IMR-90 (cell line): ENCODE measurements at regions of chr10 and their contacts with region 1.

Region 1: DNA sequence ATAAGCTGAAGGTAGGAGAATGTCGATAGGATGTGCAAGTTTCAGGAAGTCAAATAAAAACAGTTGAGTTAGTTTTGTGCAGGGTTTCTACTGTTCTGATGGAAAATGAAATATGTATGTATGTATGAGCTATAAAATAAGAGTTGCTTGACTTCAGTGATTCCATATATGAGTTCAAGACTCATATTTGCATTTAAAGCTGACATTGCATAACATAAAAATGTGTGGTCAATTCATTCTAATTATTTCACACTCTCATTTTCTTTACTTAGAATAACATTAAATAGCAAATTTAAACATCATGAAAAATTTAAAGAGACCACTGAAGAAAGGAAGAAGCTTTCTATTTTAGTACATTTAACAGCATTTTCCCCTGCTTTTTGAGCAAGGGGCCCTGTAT is 37.8 kb downstream of the IFIT5 start:
- DNase-seq: no peak
- ATAC-seq: no peak
- H3K4me3 ChIP-seq: no peak overlapping the region
- H3K27ac ChIP-seq: no peak overlapping the region
- H3K4me1 ChIP-seq: no peaks in the 10 kb centered on the region; the same call in 1 of the 2 replicates
- H3K27me3 ChIP-seq: no peaks in the 10 kb centered on the region
- CTCF ChIP-seq: no peak
- POLR2A ChIP-seq: no peak
- RAD21 ChIP-seq: no peak

Region 2: DNA sequence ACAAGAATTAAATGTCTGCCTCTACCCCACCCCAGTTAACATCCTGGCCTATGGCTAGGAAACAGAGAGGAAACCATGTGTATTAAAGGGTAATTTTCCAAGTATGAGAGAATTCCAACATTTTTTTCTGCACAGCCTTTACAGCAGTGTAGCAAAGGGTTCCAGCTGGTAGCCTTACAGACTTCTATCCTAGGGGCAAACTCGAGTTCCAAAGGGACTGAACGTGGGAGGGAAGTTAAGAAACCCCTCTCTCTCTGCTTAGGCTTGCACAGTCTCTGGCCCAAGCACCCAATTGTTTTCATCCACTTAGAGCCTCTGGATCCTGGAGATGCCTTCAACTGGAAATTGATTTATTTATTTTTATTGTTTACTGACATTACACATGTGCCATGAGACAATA is 22.9 kb after region 1 on chr10:
- CTCF ChIA-PET with region 1: no interaction called
- POLR2A ChIA-PET with region 1: interaction called, 12 read pairs
- dilution Hi-C with region 1: no loop called
- in situ Hi-C with region 1: no loop called
- intact Hi-C with region 1: no loop called
- DNase-seq: no peak
- ATAC-seq: peak; percentile 27
- H3K4me3 ChIP-seq: no peak overlapping the region
- H3K27ac ChIP-seq: no peak overlapping the region
- H3K4me1 ChIP-seq: peaks cover 27% of the 10 kb centered on the region
- H3K27me3 ChIP-seq: no peaks in the 10 kb centered on the region
- CTCF ChIP-seq: no peak
- POLR2A ChIP-seq: no peak
- RAD21 ChIP-seq: no peak

Region 3: DNA sequence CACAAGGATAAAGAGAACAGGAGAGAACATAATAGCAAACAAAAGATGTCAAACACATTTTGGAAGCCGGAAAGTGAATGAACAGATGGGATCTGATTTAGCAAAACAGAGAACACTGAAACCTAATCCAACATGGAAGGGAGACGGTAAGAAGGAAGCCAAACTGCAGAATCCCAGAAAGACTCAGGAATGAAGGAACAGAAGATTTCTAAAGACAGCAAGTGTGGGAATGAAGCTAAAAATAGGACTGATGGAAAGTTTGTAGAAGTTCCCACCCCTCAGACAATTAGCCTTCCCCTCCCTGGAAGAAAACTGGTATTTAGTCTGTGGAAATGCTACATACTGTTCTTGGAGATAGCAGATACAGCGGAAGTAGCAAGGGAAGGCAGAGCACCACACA is 42.4 kb after region 1 on chr10:
- CTCF ChIA-PET with region 1: no interaction called
- POLR2A ChIA-PET with region 1: no interaction called
- dilution Hi-C with region 1: no loop called
- in situ Hi-C with region 1: no loop called
- intact Hi-C with region 1: no loop called
- DNase-seq: no peak
- ATAC-seq: no peak
- H3K4me3 ChIP-seq: no peak overlapping the region
- H3K27ac ChIP-seq: no peak overlapping the region
- H3K4me1 ChIP-seq: no peaks in the 10 kb centered on the region
- H3K27me3 ChIP-seq: no peaks in the 10 kb centered on the region
- CTCF ChIP-seq: no peak
- POLR2A ChIP-seq: no peak
- RAD21 ChIP-seq: no peak